Heart right ventricle (tissue), 16 donors: ENCODE measurements at regions of chr18 and their contacts with region 1.

Region 1: GRCh38 chr18:5288517-5288935 is 7.0 kb downstream of the ZBTB14 start:
- DNase-seq: no peak
- ATAC-seq: no peak
- H3K4me3 ChIP-seq: no peak overlapping the region
- H3K27ac ChIP-seq: no peak overlapping the region
- H3K4me1 ChIP-seq: peaks cover 0 to 9% (median 3%) of the 10 kb centered on the region in 9 donors
- H3K27me3 ChIP-seq: no peaks in the 10 kb centered on the region
- CTCF ChIP-seq: no peak

Region 2: GRCh38 chr18:5097116-5097703 is 191.3 kb before region 1 on chr18:
- intact Hi-C with region 1: no loop called
- DNase-seq: no peak
- ATAC-seq: no peak
- H3K4me3 ChIP-seq: no peak overlapping the region
- H3K27ac ChIP-seq: no peak overlapping the region
- H3K4me1 ChIP-seq: no peaks in the 10 kb centered on the region
- H3K27me3 ChIP-seq: no peaks in the 10 kb centered on the region
- CTCF ChIP-seq: no peak

Region 3: DNA sequence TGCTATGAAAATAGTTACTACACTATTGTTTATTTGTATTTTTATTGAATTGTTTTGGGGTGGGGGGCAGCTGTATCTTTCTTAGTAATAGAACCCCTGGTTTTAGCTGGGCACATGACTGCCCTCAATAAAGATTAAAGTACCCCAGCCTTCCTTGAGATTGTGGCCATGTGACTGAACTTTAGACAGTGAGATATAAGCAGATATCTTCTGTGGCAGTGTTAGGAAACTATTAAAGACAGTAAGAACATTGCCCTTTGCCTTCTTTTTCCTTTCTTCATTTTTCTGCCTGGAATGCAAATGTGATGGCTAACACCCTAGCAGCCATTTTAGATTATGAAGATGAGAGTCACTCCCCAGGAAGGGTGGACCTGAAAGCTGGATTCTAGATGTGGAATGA is 43.6 kb before region 1 on chr18:
- intact Hi-C with region 1: loop called in 2 of 10 experiments (anchors 5 kb)
- DNase-seq: no peak
- ATAC-seq: no peak
- H3K4me3 ChIP-seq: no peak overlapping the region
- H3K27ac ChIP-seq: no peak overlapping the region
- H3K4me1 ChIP-seq: peaks cover 0 to 18% (median 5%) of the 10 kb centered on the region in 9 donors
- H3K27me3 ChIP-seq: no peaks in the 10 kb centered on the region
- CTCF ChIP-seq: no peak